Activated CD8-positive, alpha-beta T cell treated with anti-CD3 and anti-CD28 coated beads, Interleukin-2, amount 10 ng/mL, durations not matched to agents 7 days and 5 days (primary cell): ENCODE measurements at regions of chr20 and their contacts with region 1.

Region 1: GRCh38 chr20:49166534-49167449 is 21.3 kb downstream of the STAU1 start:
- DNase-seq: no peak
- ATAC-seq: peak; percentile 85
- H3K4me3 Mint-ChIP-seq: peak overlapping the region; percentile 49
- H3K27ac Mint-ChIP-seq: peak overlapping the region; percentile 84
- H3K4me1 Mint-ChIP-seq: peaks cover 50% of the 10 kb centered on the region
- H3K27me3 Mint-ChIP-seq: no peaks in the 10 kb centered on the region

Region 2: DNA sequence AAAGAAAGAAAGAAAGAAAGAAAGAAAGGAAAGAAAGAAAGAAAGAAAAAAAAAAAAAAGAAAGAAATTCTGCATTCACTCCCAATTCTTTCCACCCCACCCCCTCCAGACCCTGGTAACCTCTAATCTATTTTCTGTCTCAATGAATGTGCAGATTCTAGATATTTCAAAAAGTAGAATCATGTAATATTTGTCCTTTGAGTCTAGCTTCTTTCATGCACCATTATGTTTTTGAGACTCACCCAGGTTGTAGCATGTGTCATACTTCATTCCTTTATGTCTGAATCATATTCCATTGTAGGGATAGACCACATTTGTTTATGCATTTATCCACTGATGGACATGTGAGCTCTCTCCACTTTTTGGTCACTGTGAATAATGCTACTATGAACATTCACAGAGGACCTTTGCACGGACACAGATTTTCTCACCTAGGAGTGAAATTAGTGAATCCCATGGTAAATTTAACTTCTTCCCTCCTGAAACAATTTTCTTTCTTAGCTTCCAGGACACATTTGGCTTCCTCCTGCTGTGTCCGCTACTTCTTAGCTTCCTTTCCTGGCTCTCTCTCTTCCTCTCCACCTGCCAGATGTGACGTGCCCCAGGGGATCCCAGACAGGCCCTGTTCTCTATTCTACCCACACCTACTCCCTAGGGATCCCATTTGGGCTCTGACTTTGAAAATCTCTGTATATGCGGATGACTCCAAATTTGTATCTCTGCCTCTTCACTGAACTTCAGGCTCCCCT is 269.4 kb before region 1 on chr20:
- CTCF ChIA-PET with region 1: no interaction called
- POLR2A ChIA-PET with region 1: no interaction called
- DNase-seq: no peak
- ATAC-seq: no peak
- H3K4me3 Mint-ChIP-seq: no peak overlapping the region
- H3K27ac Mint-ChIP-seq: no peak overlapping the region
- H3K4me1 Mint-ChIP-seq: peaks cover 6% of the 10 kb centered on the region
- H3K27me3 Mint-ChIP-seq: peaks cover 25% of the 10 kb centered on the region

Region 3: DNA sequence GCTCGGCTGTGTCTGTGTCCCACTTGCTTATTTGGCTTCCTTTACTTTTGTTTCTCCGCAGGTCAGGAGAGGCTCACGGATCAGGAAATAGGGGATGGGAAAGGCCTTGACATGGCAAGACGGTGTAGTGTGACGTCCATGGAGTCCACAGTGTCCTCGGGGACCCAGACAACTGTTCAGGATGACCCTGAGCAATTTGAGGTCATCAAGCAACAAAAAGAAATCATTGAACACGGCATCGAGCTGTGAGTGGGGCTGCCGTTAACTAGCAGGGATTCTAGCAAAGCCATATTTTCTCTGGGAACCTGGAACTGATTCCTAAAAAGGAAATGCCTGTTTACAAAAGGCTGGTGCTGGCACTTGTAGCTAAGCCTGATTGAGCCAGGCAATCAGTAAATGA is 190.8 kb before region 1 on chr20:
- CTCF ChIA-PET with region 1: no interaction called
- POLR2A ChIA-PET with region 1: no interaction called
- DNase-seq: no peak
- ATAC-seq: no peak
- H3K4me3 Mint-ChIP-seq: no peak overlapping the region
- H3K27ac Mint-ChIP-seq: no peak overlapping the region
- H3K4me1 Mint-ChIP-seq: no peaks in the 10 kb centered on the region
- H3K27me3 Mint-ChIP-seq: no peaks in the 10 kb centered on the region

Region 4: DNA sequence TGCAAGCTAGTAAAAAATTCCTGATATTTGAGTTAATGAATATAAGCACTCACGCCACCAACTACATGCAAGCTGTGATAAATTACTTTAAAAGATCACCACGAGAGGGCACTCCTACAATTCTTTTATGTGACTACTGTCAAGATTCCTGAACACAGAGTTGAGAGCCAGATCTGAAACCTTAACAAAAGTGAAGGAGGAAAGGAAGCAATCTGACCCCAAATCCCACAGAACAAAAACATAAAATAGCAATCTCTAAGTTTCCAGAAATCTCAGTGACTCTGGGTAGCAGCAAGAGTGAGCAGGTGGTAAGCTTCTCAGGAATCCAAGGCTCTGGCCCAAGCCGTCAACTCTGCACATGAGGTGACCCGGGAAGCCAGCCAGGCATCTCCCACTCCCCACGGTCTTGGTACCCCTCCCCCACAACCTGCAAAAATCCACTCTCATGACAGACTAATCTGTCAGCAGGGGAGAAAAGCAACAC is 33.8 kb before region 1 on chr20:
- CTCF ChIA-PET with region 1: interaction called, 31 read pairs
- POLR2A ChIA-PET with region 1: no interaction called
- DNase-seq: peak; percentile 30
- ATAC-seq: peak; percentile 53
- H3K4me3 Mint-ChIP-seq: no peak overlapping the region
- H3K27ac Mint-ChIP-seq: no peak overlapping the region
- H3K4me1 Mint-ChIP-seq: peaks cover 6% of the 10 kb centered on the region
- H3K27me3 Mint-ChIP-seq: no peaks in the 10 kb centered on the region

Region 5: GRCh38 chr20:49179368-49180277 is 12.8 kb after region 1 on chr20:
- CTCF ChIA-PET with region 1: interaction called, 14 read pairs
- POLR2A ChIA-PET with region 1: interaction called, 13 read pairs
- DNase-seq: no peak
- ATAC-seq: no peak
- H3K4me3 Mint-ChIP-seq: no peak overlapping the region
- H3K27ac Mint-ChIP-seq: peak overlapping the region; percentile 54
- H3K4me1 Mint-ChIP-seq: peaks cover 53% of the 10 kb centered on the region
- H3K27me3 Mint-ChIP-seq: no peaks in the 10 kb centered on the region

Region 6: GRCh38 chr20:49186535-49187329 is 19.9 kb after region 1 on chr20:
- CTCF ChIA-PET with region 1: interaction called, 4 read pairs
- POLR2A ChIA-PET with region 1: interaction called, 18 read pairs
- DNase-seq: peak; percentile 75
- ATAC-seq: peak; percentile 41
- H3K4me3 Mint-ChIP-seq: peak overlapping the region; percentile 83
- H3K27ac Mint-ChIP-seq: peak overlapping the region; percentile 79
- H3K4me1 Mint-ChIP-seq: peaks cover 48% of the 10 kb centered on the region
- H3K27me3 Mint-ChIP-seq: peaks cover 6% of the 10 kb centered on the region